Sigmoid colon (tissue), 7 donors: ENCODE measurements at regions of chr1 and their contacts with region 1.

Region 1: DNA sequence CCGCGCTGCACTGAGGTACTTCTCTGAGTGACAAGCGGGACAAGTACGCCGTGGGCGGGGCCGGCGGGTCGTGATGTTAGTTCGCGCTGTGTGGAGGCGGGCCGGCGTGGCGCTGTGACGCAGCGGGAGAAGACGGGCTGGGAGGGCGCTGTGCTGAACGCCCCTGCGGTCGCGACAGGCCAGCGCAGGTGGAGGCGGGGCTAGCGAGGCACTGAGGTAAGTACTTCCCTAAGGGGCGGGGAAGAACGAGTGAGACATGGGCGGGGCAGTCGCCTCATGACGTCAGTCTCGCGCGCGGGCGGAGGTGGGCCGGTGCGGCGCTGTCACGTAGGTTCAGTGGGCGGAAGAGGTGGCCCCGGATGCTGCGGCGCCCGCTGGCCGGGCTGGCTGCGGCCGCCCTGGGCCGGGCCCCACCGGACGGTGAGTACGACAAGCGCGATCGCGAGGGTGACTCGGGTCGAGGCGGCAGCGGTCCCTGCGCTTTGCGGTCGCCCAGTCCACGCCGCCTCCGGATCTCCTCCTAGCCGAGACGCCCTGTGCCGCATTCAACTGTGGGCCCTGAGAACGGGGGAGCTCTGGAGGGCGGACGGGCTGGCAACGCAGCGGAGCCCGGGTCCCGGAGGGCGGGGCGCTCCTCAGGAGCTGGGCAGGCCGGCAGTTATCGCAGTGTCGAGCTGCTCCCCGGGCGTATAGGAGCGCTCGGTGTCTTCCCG is at the start of gene GUK1:
- DNase-seq: peak; percentile 100
- H3K4me3 ChIP-seq: peak within 1 kb of the TSS; percentile 70 to 96 (median 88)
- H3K27ac ChIP-seq: peak within 1 kb of the TSS; percentile 93 to 99 (median 96)
- H3K4me1 ChIP-seq: peaks cover 0 to 39% (median 38%) of the 10 kb centered on the region in 4 donors
- H3K27me3 ChIP-seq: no peaks in the 10 kb centered on the region
- CTCF ChIP-seq: peak in 1 of 4 experiments; percentile 15
- EP300 ChIP-seq: peak in 2 of 4 donors; percentile 8 to 95
- POLR2A ChIP-seq: peak; percentile 87 to 95
- total RNA-seq, gene GUK1: 225 to 366 (median 303) TPM

Region 2: DNA sequence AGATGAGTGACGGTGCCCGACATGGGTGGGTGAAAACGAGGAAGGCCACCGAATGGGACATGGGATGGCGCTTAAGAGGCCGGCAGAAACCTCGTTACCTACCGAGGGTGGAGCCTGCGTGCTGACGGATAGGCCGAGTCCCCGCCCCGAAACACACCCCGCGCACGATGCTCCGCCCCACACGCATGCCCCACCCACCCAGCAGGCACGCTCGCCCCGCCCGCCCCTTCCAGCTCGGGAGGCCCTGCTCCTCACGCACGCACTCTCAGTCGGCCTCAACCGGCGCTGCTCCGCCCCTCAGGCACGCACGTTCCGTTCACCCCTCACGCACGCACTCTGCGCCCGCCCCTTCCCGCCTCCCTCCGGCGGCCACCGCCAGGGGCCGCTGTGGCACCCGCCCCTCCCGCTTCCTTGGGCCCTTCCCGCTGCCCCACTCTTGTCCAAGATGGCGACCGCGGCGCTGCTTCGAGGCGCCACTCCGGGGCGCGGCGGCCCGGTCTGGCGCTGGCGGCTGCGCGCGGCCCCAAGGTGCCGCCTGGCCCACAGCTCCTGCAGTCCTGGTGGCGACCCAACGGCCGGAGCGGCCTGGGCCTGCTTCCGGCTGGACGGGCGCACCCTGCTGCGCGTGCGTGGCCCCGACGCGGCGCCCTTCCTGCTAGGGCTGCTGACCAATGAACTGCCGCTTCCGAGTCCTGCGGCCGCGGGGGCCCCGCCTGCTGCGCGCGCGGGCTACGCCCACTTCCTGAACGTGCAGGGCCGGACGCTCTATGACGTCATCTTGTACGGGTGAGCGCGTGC is 25.5 kb after region 1 on chr1 and contains the start of gene IBA57:
- intact Hi-C with region 1: loop called (anchors 1 kb)
- DNase-seq: peak; percentile 100
- H3K4me3 ChIP-seq: peak within 1 kb of the TSS; percentile 69 to 83 (median 78)
- H3K27ac ChIP-seq: peak within 1 kb of the TSS; percentile 94 to 100 (median 98)
- H3K4me1 ChIP-seq: peaks cover 0 to 30% (median 24%) of the 10 kb centered on the region in 4 donors
- H3K27me3 ChIP-seq: peaks cover 3 to 23% (median 10%) of the 10 kb centered on the region in 3 donors
- CTCF ChIP-seq: peak; percentile 64 to 92 (median 80)
- EP300 ChIP-seq: peak in 2 of 4 donors; percentile 84 to 99
- POLR2A ChIP-seq: no peak
- total RNA-seq, gene IBA57: 2.9 to 14.0 (median 7.3) TPM

Region 3: GRCh38 chr1:228212966-228213844 is 73.1 kb after region 1 on chr1:
- intact Hi-C with region 1: loop called (anchors 10 kb)
- DNase-seq: peak; percentile 90
- H3K4me3 ChIP-seq: peak overlapping the region; percentile 31 to 52 (median 42)
- H3K27ac ChIP-seq: peak overlapping the region in 1 of 4 donors; percentile 15
- H3K4me1 ChIP-seq: peaks cover 0 to 22% (median 19%) of the 10 kb centered on the region in 4 donors
- H3K27me3 ChIP-seq: peaks cover 12 to 36% (median 24%) of the 10 kb centered on the region in 3 donors
- CTCF ChIP-seq: peak in 3 of 4 experiments; percentile 20 to 62 (median 32)
- EP300 ChIP-seq: no peak
- POLR2A ChIP-seq: no peak

Region 4: DNA sequence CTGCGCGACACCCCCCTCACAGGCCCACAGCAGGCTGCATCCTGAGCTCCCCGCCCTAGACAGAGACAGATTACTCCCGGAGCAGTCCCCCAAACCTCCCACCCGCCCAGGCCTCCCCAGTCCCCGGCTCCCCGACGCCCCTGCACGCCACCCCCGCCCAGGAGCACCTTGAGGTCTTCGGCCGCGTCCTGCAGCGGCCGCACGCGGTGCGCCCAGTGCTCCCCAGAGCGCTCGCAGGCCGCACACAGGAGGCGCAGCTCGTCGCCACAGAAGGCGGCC is 265.8 kb after region 1 on chr1:
- intact Hi-C with region 1: loop called (anchors 5 kb)
- DNase-seq: no peak
- H3K4me3 ChIP-seq: peak overlapping the region; percentile 75 to 99 (median 83)
- H3K27ac ChIP-seq: peak overlapping the region; percentile 81 to 87 (median 86)
- H3K4me1 ChIP-seq: peaks cover 0 to 47% (median 42%) of the 10 kb centered on the region in 4 donors
- H3K27me3 ChIP-seq: no peaks in the 10 kb centered on the region
- CTCF ChIP-seq: no peak
- EP300 ChIP-seq: no peak
- POLR2A ChIP-seq: no peak